ENCODE measurements at regions of chr5 and their contacts with region 1.

Region 1: DNA sequence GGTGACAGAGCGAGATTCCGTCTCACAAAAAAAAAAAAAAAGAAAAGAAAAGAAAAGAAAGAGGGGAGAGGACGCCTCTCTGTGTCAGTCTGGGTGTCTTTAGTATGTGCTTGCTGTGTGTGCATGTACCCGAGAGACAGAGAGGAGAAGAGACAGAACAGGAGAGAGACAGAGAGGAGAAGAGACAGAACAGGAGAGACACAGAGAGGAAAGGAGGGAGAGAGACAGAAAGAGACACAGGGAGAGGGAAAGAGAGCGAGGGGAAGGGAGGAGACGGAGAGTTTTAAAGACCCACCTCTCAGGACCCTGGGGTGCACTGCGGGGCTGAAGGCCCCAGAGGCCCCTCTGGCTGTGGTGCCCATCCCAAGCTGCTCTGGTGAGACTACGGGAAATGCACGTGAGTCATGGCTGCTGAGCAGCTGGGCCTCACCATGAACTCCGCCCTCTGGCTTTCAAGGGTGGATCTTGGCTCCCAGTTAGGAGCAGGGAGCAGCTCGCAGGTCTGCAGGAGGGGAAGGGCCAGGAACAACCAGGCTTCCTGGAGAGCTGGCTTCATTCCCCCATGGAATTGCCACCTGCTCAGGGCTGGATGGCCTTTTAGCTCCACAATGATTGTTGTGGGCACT is 7.9 kb downstream of the SLC6A3 start:
- DNase-seq: peak; percentile 43
- ATAC-seq: peak; percentile 92
- H3K4me3 Mint-ChIP-seq: no peak overlapping the region
- H3K27ac Mint-ChIP-seq: no peak overlapping the region
- H3K4me1 Mint-ChIP-seq: peaks cover 8% of the 10 kb centered on the region; the same call in 1 of the 2 replicates
- H3K27me3 Mint-ChIP-seq: peaks cover 21% of the 10 kb centered on the region
- CTCF ChIP-seq: no peak

Region 2: DNA sequence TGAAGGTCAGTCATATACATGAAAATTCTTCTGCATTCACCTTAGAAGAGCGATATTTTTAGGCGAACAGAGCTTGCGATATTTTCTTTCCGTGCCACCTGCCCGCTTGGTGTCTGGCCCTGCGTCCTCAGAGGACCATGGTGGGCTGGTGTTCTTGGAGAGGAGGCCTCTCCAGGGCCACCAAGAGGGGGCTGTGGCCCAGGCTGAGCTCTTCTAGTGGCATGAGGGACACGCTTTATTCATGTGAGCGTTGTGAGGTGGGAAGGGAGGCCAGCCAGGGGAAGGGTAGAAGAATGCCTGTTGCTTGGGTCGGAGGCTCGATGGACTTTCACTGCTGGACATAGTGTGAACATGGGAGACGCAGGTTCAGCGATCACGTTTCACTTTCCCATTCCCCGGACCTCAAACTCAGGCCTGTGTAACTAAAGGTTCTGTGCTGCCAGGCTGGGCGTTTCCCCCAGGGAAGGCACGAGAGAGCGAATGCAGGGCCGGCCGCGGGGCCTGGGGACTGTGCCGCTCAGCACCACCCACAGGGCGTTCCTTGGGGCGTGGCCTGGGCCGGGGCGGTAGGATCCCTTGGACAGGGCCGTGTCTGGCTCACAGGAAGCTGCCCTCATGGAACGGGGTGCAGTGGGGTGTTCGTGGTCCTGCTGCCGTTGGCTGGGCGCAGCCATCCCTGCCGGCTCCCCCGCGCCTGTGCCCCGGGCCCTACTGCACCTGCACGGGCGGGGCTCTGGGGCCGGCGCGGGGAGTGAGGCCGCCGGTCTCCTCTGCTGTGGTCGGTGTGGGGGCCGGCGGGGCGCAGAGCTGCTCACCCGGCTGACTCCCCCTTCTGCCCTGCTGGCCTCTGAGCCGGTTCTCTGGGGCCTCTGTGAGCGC is 51.7 kb before region 1 on chr5:
- CTCF ChIA-PET with region 1: interaction called, 21 read pairs
- POLR2A ChIA-PET with region 1: no interaction called
- DNase-seq: peak; percentile 89
- ATAC-seq: peak; percentile 98
- H3K4me3 Mint-ChIP-seq: peak overlapping the region; percentile 86
- H3K27ac Mint-ChIP-seq: peak overlapping the region; percentile 80; the same call in 1 of the 2 replicates
- H3K4me1 Mint-ChIP-seq: peaks cover 15% of the 10 kb centered on the region
- H3K27me3 Mint-ChIP-seq: peaks cover 67% of the 10 kb centered on the region
- CTCF ChIP-seq: no peak

Measured in WTC11 (cell line).